CD4-positive, alpha-beta T cell (primary cell): ENCODE measurements at regions of chr10 and their contacts with region 1.

Region 1: DNA sequence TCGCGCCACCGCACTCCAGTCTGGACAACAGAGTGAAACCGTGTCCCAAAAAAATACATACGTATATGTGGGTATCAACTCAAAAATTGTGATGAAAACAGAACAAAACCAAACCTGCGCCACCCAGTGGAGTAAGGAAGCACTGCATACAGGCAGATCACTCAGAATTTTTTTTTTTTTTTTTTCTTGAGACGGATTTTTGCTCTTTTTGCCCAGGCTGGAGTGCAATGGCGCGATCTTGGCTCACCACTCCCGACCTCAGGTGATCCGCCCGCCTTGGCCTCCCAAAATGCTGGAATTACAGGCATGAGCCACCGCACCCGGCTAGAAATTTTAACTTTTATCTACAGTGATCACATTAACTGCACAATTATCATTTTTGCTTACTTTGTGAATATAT is 9.1 kb upstream of the TMEM236 start:
- DNase-seq: peak; percentile 50 to 78 (median 66)
- ATAC-seq: peak; percentile 44
- H3K4me3 ChIP-seq: no peak overlapping the region
- H3K4me3 Mint-ChIP-seq: no peak overlapping the region
- H3K27ac ChIP-seq: no peak overlapping the region
- H3K27ac Mint-ChIP-seq: no peak overlapping the region
- H3K4me1 ChIP-seq: no peaks in the 10 kb centered on the region
- H3K4me1 Mint-ChIP-seq: peaks cover 5% of the 10 kb centered on the region
- H3K27me3 ChIP-seq: no peaks in the 10 kb centered on the region
- H3K27me3 Mint-ChIP-seq: no peaks in the 10 kb centered on the region
- CTCF ChIP-seq: peak; percentile 89

Region 2: GRCh38 chr10:16828114-16828568 is 914.8 kb before region 1 on chr10:
- CTCF ChIA-PET with region 1: no interaction called
- POLR2A ChIA-PET with region 1: no interaction called
- intact Hi-C with region 1: loop called in 1 of 2 experiments (anchors 10 kb)
- DNase-seq: peak; percentile 30 to 88 (median 51)
- ATAC-seq: peak; percentile 99
- H3K4me3 ChIP-seq: no peak overlapping the region
- H3K4me3 Mint-ChIP-seq: no peak overlapping the region
- H3K27ac ChIP-seq: no peak overlapping the region
- H3K27ac Mint-ChIP-seq: no peak overlapping the region
- H3K4me1 ChIP-seq: peaks cover 8% of the 10 kb centered on the region
- H3K4me1 Mint-ChIP-seq: peaks cover 7% of the 10 kb centered on the region
- H3K27me3 ChIP-seq: no peaks in the 10 kb centered on the region
- H3K27me3 Mint-ChIP-seq: no peaks in the 10 kb centered on the region
- CTCF ChIP-seq: peak; percentile 63

Region 3: DNA sequence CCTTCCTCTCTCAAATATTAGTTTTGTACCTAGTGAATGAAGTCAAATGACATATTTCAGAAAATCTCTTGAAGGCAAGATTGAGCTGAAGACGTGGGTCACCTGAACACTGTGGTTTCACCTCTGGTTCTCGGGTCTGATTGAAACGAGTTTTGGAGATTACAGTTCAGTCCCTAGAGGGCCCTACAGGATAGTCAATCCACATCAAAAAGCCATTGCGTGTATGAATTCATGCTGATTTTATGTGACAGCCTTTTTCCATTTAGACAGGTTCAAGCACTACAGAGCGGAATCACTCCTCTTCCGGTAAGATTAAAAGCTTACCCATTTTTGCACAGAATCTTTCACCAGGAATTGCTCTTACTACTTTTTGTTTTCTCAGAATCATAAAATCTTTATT is 452.7 kb before region 1 on chr10:
- CTCF ChIA-PET with region 1: no interaction called
- POLR2A ChIA-PET with region 1: no interaction called
- intact Hi-C with region 1: loop called (anchors 1 to 2 kb)
- DNase-seq: peak in 4 of 14 experiments; percentile 8 to 45 (median 35)
- ATAC-seq: peak; percentile 66
- H3K4me3 ChIP-seq: no peak overlapping the region
- H3K4me3 Mint-ChIP-seq: no peak overlapping the region
- H3K27ac ChIP-seq: no peak overlapping the region
- H3K27ac Mint-ChIP-seq: no peak overlapping the region
- H3K4me1 ChIP-seq: no peaks in the 10 kb centered on the region
- H3K4me1 Mint-ChIP-seq: peaks cover 6% of the 10 kb centered on the region
- H3K27me3 ChIP-seq: no peaks in the 10 kb centered on the region
- H3K27me3 Mint-ChIP-seq: peaks cover 29% of the 10 kb centered on the region
- CTCF ChIP-seq: peak; percentile 34

Region 4: DNA sequence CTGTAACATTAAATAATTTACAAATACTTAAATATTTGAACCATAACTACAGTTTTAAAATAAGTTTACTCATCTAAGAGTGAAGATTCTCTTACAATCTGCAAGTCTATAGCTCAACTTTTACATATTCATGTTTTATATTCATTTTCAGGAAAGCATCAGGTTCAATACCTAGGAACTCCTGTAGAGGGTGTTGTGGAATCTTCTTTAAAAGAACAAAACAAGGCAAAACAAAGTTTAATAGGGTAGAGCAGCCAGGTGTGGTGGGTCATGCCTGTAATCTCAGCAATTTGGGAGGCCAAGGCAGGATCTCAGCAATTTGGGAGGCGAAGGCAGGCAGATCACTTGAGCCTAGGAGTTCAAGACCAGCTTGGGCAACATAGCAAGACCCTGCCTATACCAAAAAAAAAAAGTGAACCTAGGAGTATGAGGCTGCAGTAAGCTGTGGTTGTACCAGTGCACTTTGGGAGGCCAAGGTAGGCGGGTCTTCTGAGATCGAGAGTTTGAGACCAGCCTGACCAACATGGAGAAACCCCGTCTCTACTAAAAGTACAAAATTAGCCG is 333.7 kb before region 1 on chr10:
- CTCF ChIA-PET with region 1: no interaction called
- POLR2A ChIA-PET with region 1: no interaction called
- intact Hi-C with region 1: loop called in 1 of 2 experiments (anchors 2 kb)
- DNase-seq: peak in 4 of 14 experiments; percentile 41 to 65 (median 62)
- ATAC-seq: peak; percentile 92
- H3K4me3 ChIP-seq: no peak overlapping the region
- H3K4me3 Mint-ChIP-seq: no peak overlapping the region
- H3K27ac ChIP-seq: no peak overlapping the region
- H3K27ac Mint-ChIP-seq: peak overlapping the region; percentile 56
- H3K4me1 ChIP-seq: peaks cover 6% of the 10 kb centered on the region
- H3K4me1 Mint-ChIP-seq: peaks cover 29% of the 10 kb centered on the region
- H3K27me3 ChIP-seq: no peaks in the 10 kb centered on the region
- H3K27me3 Mint-ChIP-seq: no peaks in the 10 kb centered on the region
- CTCF ChIP-seq: peak; percentile 74

Region 5: DNA sequence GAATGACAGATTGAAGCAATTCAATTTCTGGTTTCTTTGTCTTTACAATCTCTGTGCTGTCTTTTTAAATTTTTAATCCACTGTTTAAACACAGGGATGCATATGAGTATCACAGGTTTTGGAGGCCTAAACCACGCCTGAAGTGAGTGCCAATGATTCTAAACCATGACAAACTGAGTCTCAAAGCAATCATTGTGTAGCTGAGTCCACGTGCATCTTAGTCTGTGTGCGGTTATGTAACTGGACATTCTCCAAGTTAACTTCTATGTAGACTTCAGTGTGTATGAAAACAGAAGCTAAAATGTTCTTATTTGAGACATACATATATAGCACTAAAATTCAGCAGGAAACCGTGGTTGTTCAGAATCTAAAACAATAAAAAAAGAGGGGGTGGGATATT is 209.2 kb before region 1 on chr10:
- CTCF ChIA-PET with region 1: no interaction called
- POLR2A ChIA-PET with region 1: no interaction called
- intact Hi-C with region 1: no loop called
- DNase-seq: no peak
- ATAC-seq: no peak
- H3K4me3 ChIP-seq: no peak overlapping the region
- H3K4me3 Mint-ChIP-seq: no peak overlapping the region
- H3K27ac ChIP-seq: no peak overlapping the region
- H3K27ac Mint-ChIP-seq: no peak overlapping the region
- H3K4me1 ChIP-seq: no peaks in the 10 kb centered on the region
- H3K4me1 Mint-ChIP-seq: no peaks in the 10 kb centered on the region
- H3K27me3 ChIP-seq: no peaks in the 10 kb centered on the region
- H3K27me3 Mint-ChIP-seq: no peaks in the 10 kb centered on the region
- CTCF ChIP-seq: no peak